ENCODE measurements at regions of chr12 and their contacts with region 1.

Region 1: GRCh38 chr12:121110211-121110940 is 22.3 kb upstream of the P2RX7 start:
- DNase-seq: peak; percentile 78
- ATAC-seq: peak; percentile 71
- H3K4me3 ChIP-seq: no peak overlapping the region
- H3K4me3 Mint-ChIP-seq: no peak overlapping the region
- H3K27ac ChIP-seq: no peak overlapping the region
- H3K27ac Mint-ChIP-seq: no peak overlapping the region
- H3K4me1 ChIP-seq: peaks cover 0 to 6% of the 10 kb centered on the region in 2 donors
- H3K4me1 Mint-ChIP-seq: peaks cover 4% of the 10 kb centered on the region
- H3K27me3 ChIP-seq: no peaks in the 10 kb centered on the region
- H3K27me3 Mint-ChIP-seq: no peaks in the 10 kb centered on the region
- CTCF ChIP-seq: peak; percentile 99

Region 2: GRCh38 chr12:120356567-120357030 is 753.8 kb before region 1 on chr12:
- CTCF ChIA-PET with region 1: no interaction called
- POLR2A ChIA-PET with region 1: no interaction called
- intact Hi-C with region 1: loop called (anchors 1 kb)
- DNase-seq: peak; percentile 78
- ATAC-seq: peak; percentile 73
- H3K4me3 ChIP-seq: no peak overlapping the region
- H3K4me3 Mint-ChIP-seq: no peak overlapping the region
- H3K27ac ChIP-seq: no peak overlapping the region
- H3K27ac Mint-ChIP-seq: no peak overlapping the region
- H3K4me1 ChIP-seq: peaks cover 0 to 6% of the 10 kb centered on the region in 2 donors
- H3K4me1 Mint-ChIP-seq: peaks cover under 1% of the 10 kb centered on the region
- H3K27me3 ChIP-seq: peaks cover 0 to 20% (median 8%) of the 10 kb centered on the region in 4 experiments
- H3K27me3 Mint-ChIP-seq: peaks cover 52% of the 10 kb centered on the region
- CTCF ChIP-seq: peak; percentile 84

Region 3: GRCh38 chr12:121060149-121061001 is 50.0 kb before region 1 on chr12:
- CTCF ChIA-PET with region 1: interaction called, 3 read pairs
- POLR2A ChIA-PET with region 1: no interaction called
- intact Hi-C with region 1: loop called (anchors 5 kb)
- DNase-seq: peak; percentile 82
- ATAC-seq: peak; percentile 96
- H3K4me3 ChIP-seq: peak overlapping the region; percentile 47 to 65 (median 60)
- H3K4me3 Mint-ChIP-seq: peak overlapping the region; percentile 91
- H3K27ac ChIP-seq: peak overlapping the region; percentile 47 to 82
- H3K27ac Mint-ChIP-seq: peak overlapping the region; percentile 96
- H3K4me1 ChIP-seq: peaks cover 6 to 17% of the 10 kb centered on the region in 2 donors
- H3K4me1 Mint-ChIP-seq: peaks cover 11% of the 10 kb centered on the region
- H3K27me3 ChIP-seq: no peaks in the 10 kb centered on the region
- H3K27me3 Mint-ChIP-seq: no peaks in the 10 kb centered on the region
- CTCF ChIP-seq: peak; percentile 70

Region 4: GRCh38 chr12:121128970-121129810 is 18.8 kb after region 1 on chr12:
- CTCF ChIA-PET with region 1: interaction called, 3 read pairs
- POLR2A ChIA-PET with region 1: no interaction called
- intact Hi-C with region 1: loop called (anchors 2 kb)
- DNase-seq: peak; percentile 91
- ATAC-seq: peak; percentile 86
- H3K4me3 ChIP-seq: peak overlapping the region; percentile 21 to 66 (median 30)
- H3K4me3 Mint-ChIP-seq: peak overlapping the region; percentile 82
- H3K27ac ChIP-seq: peak overlapping the region; percentile 91
- H3K27ac Mint-ChIP-seq: peak overlapping the region; percentile 92
- H3K4me1 ChIP-seq: peaks cover 42 to 50% of the 10 kb centered on the region in 2 donors
- H3K4me1 Mint-ChIP-seq: peaks cover 64% of the 10 kb centered on the region
- H3K27me3 ChIP-seq: no peaks in the 10 kb centered on the region
- H3K27me3 Mint-ChIP-seq: no peaks in the 10 kb centered on the region
- CTCF ChIP-seq: no peak

Region 5: GRCh38 chr12:121223292-121224285 is 113.2 kb after region 1 on chr12:
- CTCF ChIA-PET with region 1: no interaction called
- POLR2A ChIA-PET with region 1: no interaction called
- intact Hi-C with region 1: loop called (anchors 2 kb)
- DNase-seq: peak; percentile 52
- ATAC-seq: peak; percentile 51
- H3K4me3 ChIP-seq: no peak overlapping the region
- H3K4me3 Mint-ChIP-seq: peak overlapping the region; percentile 40
- H3K27ac ChIP-seq: peak overlapping the region; percentile 40 to 68
- H3K27ac Mint-ChIP-seq: peak overlapping the region; percentile 81
- H3K4me1 ChIP-seq: peaks cover 17 to 31% of the 10 kb centered on the region in 2 donors
- H3K4me1 Mint-ChIP-seq: peaks cover 30% of the 10 kb centered on the region
- H3K27me3 ChIP-seq: no peaks in the 10 kb centered on the region
- H3K27me3 Mint-ChIP-seq: no peaks in the 10 kb centered on the region
- CTCF ChIP-seq: peak; percentile 26

Measured in B cell (primary cell).